ENCODE measurements at regions of chr7 and their contacts with region 1.

Region 1: GRCh38 chr7:1579481-1580421 is 9.9 kb upstream of the PSMG3 start:
- DNase-seq: peak; percentile 61 to 81
- ATAC-seq: peak; percentile 90 to 96 (median 92)
- H3K4me3 ChIP-seq: no peak overlapping the region
- H3K27ac ChIP-seq: no peak overlapping the region
- H3K4me1 ChIP-seq: peaks cover 0 to 13% (median 4%) of the 10 kb centered on the region in 9 donors
- H3K27me3 ChIP-seq: no peaks in the 10 kb centered on the region
- CTCF ChIP-seq: peak; percentile 62 to 90 (median 84)

Region 2: GRCh38 chr7:1466524-1467271 is 113.1 kb before region 1 on chr7:
- intact Hi-C with region 1: no loop called
- DNase-seq: peak; percentile 75 to 81
- ATAC-seq: peak; percentile 50 to 85 (median 77)
- H3K4me3 ChIP-seq: no peak overlapping the region
- H3K27ac ChIP-seq: peak overlapping the region; percentile 54 to 87 (median 75)
- H3K4me1 ChIP-seq: peaks cover 9 to 30% (median 21%) of the 10 kb centered on the region in 9 donors
- H3K27me3 ChIP-seq: no peaks in the 10 kb centered on the region
- CTCF ChIP-seq: peak in 1 of 9 donors; percentile 26

Region 3: GRCh38 chr7:1646957-1647891 is 67.5 kb after region 1 on chr7:
- intact Hi-C with region 1: loop called in 1 of 10 experiments (anchors 10 kb)
- DNase-seq: peak; percentile 55 to 58
- ATAC-seq: peak; percentile 20 to 72 (median 38)
- H3K4me3 ChIP-seq: no peak overlapping the region
- H3K27ac ChIP-seq: peak overlapping the region; percentile 58 to 88 (median 81)
- H3K4me1 ChIP-seq: peaks cover 16 to 42% (median 22%) of the 10 kb centered on the region in 9 donors
- H3K27me3 ChIP-seq: peaks cover 0 to 62% (median 42%) of the 10 kb centered on the region in 7 donors
- CTCF ChIP-seq: no peak

Region 4: DNA sequence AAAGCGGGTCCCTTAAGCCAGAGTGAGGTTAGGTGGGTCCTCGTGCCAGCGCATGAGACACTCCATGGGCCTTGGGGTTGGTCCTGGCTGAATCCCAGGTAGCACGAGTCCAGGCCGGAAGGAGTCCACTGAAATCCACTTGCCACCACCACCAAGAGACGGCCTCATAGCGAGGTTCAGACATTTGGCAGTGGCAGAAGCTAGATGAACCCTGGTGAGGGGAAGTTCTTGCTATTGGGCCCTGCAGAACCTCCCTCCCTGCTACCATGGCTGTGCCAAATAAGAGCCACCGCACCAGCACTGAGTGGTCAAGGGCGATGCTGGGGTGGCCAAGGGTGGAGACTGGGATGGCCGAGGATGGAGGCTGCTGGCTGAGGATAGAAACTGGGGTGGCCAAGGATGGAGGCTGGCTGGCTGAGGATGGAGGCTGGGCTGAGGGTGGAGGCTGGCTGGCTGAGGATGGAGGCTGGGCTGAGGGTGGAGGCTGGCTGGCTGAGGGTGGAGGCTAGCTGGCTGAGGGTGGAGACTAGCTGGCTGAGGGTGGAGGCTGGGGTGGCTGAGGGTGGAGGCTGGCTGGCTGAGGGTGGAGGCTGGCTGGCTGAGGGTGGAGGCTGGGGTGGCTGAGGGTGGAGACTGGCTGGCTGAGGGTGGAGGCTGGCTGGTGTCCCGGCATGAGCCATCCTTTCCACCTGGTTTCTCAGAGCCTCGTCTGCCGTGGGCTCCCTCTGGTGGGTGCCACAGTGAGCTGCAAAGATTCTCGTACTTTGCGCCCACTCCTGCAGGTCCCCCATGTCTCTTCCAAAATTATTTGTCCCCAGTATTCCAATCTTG is 178.5 kb after region 1 on chr7:
- intact Hi-C with region 1: loop called in 6 of 10 experiments (anchors 5 to 10 kb)
- DNase-seq: peak; percentile 46 to 56
- ATAC-seq: peak; percentile 64 to 87 (median 80)
- H3K4me3 ChIP-seq: no peak overlapping the region
- H3K27ac ChIP-seq: peak overlapping the region in 5 of 10 donors; percentile 50 to 71 (median 64)
- H3K4me1 ChIP-seq: peaks cover 0 to 13% (median 0%) of the 10 kb centered on the region in 9 donors
- H3K27me3 ChIP-seq: peaks cover 0 to 7% (median 0%) of the 10 kb centered on the region in 7 donors
- CTCF ChIP-seq: peak; percentile 23 to 60 (median 49)

Region 5: GRCh38 chr7:1767524-1767923 is 187.8 kb after region 1 on chr7:
- intact Hi-C with region 1: loop called in 2 of 10 experiments (anchors 10 kb)
- DNase-seq: no peak
- ATAC-seq: peak in 4 of 8 donors; percentile 28 to 41 (median 36)
- H3K4me3 ChIP-seq: no peak overlapping the region
- H3K27ac ChIP-seq: no peak overlapping the region
- H3K4me1 ChIP-seq: no peaks in the 10 kb centered on the region
- H3K27me3 ChIP-seq: peaks cover 0 to 2% (median 0%) of the 10 kb centered on the region in 7 donors
- CTCF ChIP-seq: peak in 6 of 9 donors; percentile 11 to 36 (median 28)

Region 6: DNA sequence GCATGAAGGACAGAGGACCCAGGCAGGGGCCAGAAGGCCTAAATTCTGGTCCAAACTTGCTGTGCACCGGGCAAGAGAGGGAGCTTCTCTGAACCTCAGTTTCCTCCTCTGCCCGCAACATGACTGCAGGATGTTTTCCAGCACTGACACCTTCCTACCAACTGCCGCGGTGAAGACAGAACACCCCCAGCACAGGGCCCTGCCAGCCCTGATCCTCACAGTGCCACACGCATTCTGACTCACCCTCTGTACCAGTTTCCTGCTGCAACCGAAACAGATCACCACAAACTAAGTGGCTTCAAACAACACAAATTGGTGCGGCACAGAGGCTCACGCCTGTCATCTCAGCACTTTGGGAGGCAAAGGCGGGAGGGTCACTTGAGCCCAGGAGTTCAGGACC is 634.9 kb after region 1 on chr7:
- intact Hi-C with region 1: loop called (anchors 1 to 10 kb)
- DNase-seq: no peak
- ATAC-seq: peak in 4 of 8 donors; percentile 22 to 39 (median 24)
- H3K4me3 ChIP-seq: no peak overlapping the region
- H3K27ac ChIP-seq: peak overlapping the region in 9 of 10 donors; percentile 31 to 79 (median 72)
- H3K4me1 ChIP-seq: peaks cover 0 to 28% (median 10%) of the 10 kb centered on the region in 9 donors
- H3K27me3 ChIP-seq: no peaks in the 10 kb centered on the region
- CTCF ChIP-seq: no peak

Region 7: GRCh38 chr7:2477447-2478398 is 898.0 kb after region 1 on chr7:
- intact Hi-C with region 1: loop called in 1 of 10 experiments (anchors 10 kb)
- DNase-seq: peak; percentile 64 to 77
- ATAC-seq: peak; percentile 82 to 90 (median 86)
- H3K4me3 ChIP-seq: peak overlapping the region in 2 of 10 donors; percentile 7 to 15
- H3K27ac ChIP-seq: peak overlapping the region in 4 of 10 donors; percentile 14 to 56 (median 26)
- H3K4me1 ChIP-seq: peaks cover 14 to 37% (median 29%) of the 10 kb centered on the region in 9 donors
- H3K27me3 ChIP-seq: peaks cover 0 to 21% (median 8%) of the 10 kb centered on the region in 7 donors
- CTCF ChIP-seq: peak; percentile 60 to 89 (median 77)

Measured in heart right ventricle (tissue), 16 donors.